ENCODE measurements at regions of chr15 and their contacts with region 1.

Region 1: GRCh38 chr15:85707519-85708338 is 87.0 kb downstream of the KLHL25 start:
- DNase-seq: no peak
- ATAC-seq: peak; percentile 73
- H3K4me3 ChIP-seq: peak overlapping the region in 1 of 2 donors; percentile 34
- H3K27ac ChIP-seq: peak overlapping the region; percentile 57 to 94
- H3K4me1 ChIP-seq: peaks cover 4 to 19% of the 10 kb centered on the region in 2 donors
- H3K27me3 ChIP-seq: no peaks in the 10 kb centered on the region

Region 2: DNA sequence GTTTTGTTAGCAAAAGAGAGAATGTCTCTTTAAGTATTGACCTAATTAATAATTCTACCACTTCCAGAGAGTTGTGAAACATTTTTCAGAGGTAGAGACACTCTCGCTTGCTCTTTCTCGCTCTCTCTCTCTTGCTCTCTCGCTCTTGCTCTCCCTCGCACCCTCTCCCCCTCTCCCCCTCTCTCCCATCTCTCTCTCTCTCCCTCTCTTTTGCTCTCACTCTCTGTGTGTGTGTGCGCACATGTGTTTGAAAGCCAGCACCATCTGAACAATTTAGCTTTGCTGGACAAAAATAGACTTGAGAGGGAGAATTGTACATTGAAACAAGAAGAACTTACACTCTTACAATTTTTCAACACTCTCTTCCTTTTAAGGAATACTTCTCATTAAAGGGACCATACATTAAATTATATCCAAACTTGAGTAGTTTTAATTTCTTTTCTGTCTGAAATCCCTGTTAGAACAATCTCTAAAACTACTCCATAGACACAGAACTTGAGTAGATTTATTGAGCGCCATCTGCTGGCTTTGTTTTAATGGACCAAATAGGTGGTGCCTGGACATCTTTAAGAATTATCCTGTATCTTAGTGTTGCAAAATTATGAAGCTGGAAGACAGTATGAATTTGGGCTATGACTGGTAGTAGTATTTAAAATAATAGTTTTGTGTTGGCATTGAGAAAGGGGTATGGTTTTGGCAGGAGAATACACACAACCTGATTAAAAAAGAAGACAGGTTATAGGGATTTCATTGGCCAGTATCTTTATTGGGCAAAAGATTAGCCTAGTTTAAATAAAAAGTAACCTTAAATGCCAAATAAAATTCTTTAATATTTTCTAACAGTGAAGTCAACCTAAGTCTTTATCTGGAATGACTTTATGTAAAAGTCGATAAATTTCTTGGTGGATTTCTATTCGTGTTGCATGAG is 202.7 kb before region 1 on chr15:
- intact Hi-C with region 1: loop called in 1 of 2 experiments (anchors 10 kb)
- DNase-seq: no peak
- ATAC-seq: peak; percentile 60
- H3K4me3 ChIP-seq: no peak overlapping the region
- H3K27ac ChIP-seq: no peak overlapping the region
- H3K4me1 ChIP-seq: peaks cover 0 to 4% of the 10 kb centered on the region in 2 donors
- H3K27me3 ChIP-seq: no peaks in the 10 kb centered on the region

Region 3: GRCh38 chr15:85618956-85619491 is 88.7 kb before region 1 on chr15:
- intact Hi-C with region 1: loop called (anchors 5 to 10 kb)
- DNase-seq: peak; percentile 87 to 89
- ATAC-seq: peak; percentile 84
- H3K4me3 ChIP-seq: peak overlapping the region; percentile 88 to 100
- H3K27ac ChIP-seq: peak overlapping the region; percentile 96 to 97
- H3K4me1 ChIP-seq: peaks cover 3 to 13% of the 10 kb centered on the region in 2 donors
- H3K27me3 ChIP-seq: no peaks in the 10 kb centered on the region

Region 4: GRCh38 chr15:85625856-85626255 is 81.9 kb before region 1 on chr15:
- intact Hi-C with region 1: loop called in 1 of 2 experiments (anchors 10 kb)
- DNase-seq: no peak
- ATAC-seq: no peak
- H3K4me3 ChIP-seq: no peak overlapping the region
- H3K27ac ChIP-seq: peak overlapping the region in 1 of 2 donors; percentile 54
- H3K4me1 ChIP-seq: peaks cover 5 to 12% of the 10 kb centered on the region in 2 donors
- H3K27me3 ChIP-seq: no peaks in the 10 kb centered on the region

Region 5: GRCh38 chr15:85667491-85668424 is 40.0 kb before region 1 on chr15:
- intact Hi-C with region 1: loop called in 1 of 2 experiments (anchors 5 kb)
- DNase-seq: peak in 1 of 2 donors; percentile 68
- ATAC-seq: peak; percentile 94
- H3K4me3 ChIP-seq: no peak overlapping the region
- H3K27ac ChIP-seq: peak overlapping the region; percentile 88 to 90
- H3K4me1 ChIP-seq: peaks cover 3 to 4% of the 10 kb centered on the region in 2 donors
- H3K27me3 ChIP-seq: no peaks in the 10 kb centered on the region

Region 6: GRCh38 chr15:85742186-85742821 is 34.6 kb after region 1 on chr15:
- intact Hi-C with region 1: no loop called
- DNase-seq: no peak
- ATAC-seq: peak; percentile 19
- H3K4me3 ChIP-seq: no peak overlapping the region
- H3K27ac ChIP-seq: peak overlapping the region in 1 of 2 donors; percentile 73
- H3K4me1 ChIP-seq: no peaks in the 10 kb centered on the region
- H3K27me3 ChIP-seq: no peaks in the 10 kb centered on the region